Activated T-helper 1 cell treated with anti-CD3 and anti-CD28 coated beads, Interleukin-12 subunit alpha, Interleukin-12 subunit beta, Interleukin-2, Interleukin-4 antibody, amounts not matched to agents 30 ng/mL and 10 ng/mL and 1 ng/mL, durations not matched to agents 14 hours and 24 hours and 36 hours (primary cell): ENCODE measurements at regions of chr9 and their contacts with region 1.

Region 1: GRCh38 chr9:20622330-20623020 is at the start of gene MLLT3:
- DNase-seq: peak; percentile 97
- H3K4me3 Mint-ChIP-seq: peak within 1 kb of the TSS; percentile 88
- H3K27ac Mint-ChIP-seq: peak within 1 kb of the TSS; percentile 99
- H3K4me1 Mint-ChIP-seq: peaks cover 52% of the 10 kb centered on the region
- H3K27me3 Mint-ChIP-seq: no peaks in the 10 kb centered on the region
- total RNA-seq, gene MLLT3: 33.8 and 36.4 TPM in 2 replicates

Region 2: GRCh38 chr9:19184144-19184917 is 1438.1 kb before region 1 on chr9:
- intact Hi-C with region 1: loop called (anchors 5 kb)
- DNase-seq: peak; percentile 72
- H3K4me3 Mint-ChIP-seq: peak overlapping the region; percentile 67
- H3K27ac Mint-ChIP-seq: peak overlapping the region; percentile 89
- H3K4me1 Mint-ChIP-seq: peaks cover 18% of the 10 kb centered on the region
- H3K27me3 Mint-ChIP-seq: no peaks in the 10 kb centered on the region

Region 3: GRCh38 chr9:19934301-19934868 is 688.1 kb before region 1 on chr9:
- intact Hi-C with region 1: loop called (anchors 10 kb)
- DNase-seq: no peak
- H3K4me3 Mint-ChIP-seq: peak overlapping the region; percentile 62
- H3K27ac Mint-ChIP-seq: no peak overlapping the region
- H3K4me1 Mint-ChIP-seq: peaks cover 14% of the 10 kb centered on the region
- H3K27me3 Mint-ChIP-seq: peaks cover 4% of the 10 kb centered on the region

Region 4: DNA sequence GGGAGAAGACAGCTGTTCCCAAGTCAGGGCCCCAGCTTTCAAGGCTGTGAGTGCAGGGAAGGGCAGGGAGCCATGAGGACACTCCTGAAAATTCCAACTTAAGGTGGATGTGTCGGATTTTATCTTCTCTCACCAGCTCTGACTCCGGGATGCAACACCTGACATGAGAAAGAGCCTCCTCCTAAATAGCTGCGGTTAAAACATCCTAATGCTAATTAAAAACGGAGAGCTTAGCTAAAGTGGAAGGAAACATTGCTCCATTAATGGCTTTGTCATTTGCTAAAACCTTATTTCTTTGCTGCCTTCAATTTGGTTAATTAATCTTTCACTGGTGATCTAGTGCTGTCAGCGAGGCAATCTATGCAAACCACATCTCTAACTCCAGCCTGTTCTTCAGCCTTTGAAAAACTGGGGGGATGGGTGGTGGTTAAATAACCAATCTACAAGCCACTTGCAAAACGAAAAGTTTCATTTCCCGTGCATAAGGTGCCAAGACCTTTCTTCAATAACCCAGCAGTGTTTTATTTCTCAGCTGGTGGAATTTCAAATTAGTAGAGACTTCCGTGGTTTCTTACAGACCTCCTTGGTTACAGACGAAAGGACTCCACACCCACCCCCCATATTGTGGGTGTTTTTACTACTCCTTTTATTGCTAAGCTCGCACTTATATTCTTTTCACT is 379.8 kb before region 1 on chr9:
- intact Hi-C with region 1: loop called (anchors 1 kb)
- DNase-seq: peak; percentile 36
- H3K4me3 Mint-ChIP-seq: peak overlapping the region; percentile 36
- H3K27ac Mint-ChIP-seq: peak overlapping the region; percentile 27
- H3K4me1 Mint-ChIP-seq: peaks cover 65% of the 10 kb centered on the region
- H3K27me3 Mint-ChIP-seq: peaks cover 2% of the 10 kb centered on the region

Region 5: DNA sequence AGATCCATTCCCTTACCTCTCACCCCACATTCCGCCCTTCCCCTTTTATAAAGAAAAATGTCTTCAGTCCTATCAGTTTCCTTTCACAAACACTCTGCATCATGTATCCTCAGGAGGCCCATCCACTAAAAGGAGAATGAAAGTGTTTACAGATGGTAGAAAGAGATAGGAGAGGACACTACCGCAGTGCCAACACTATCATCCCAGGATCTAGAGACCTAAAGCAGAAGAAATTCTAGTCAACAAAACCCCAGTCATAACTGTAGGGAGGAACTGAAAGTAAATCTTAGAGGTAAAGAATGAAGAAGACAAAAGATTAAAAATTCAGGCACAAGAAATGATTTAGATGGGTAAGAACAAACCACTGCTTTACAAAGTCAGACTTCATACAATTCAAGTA is 114.2 kb before region 1 on chr9:
- intact Hi-C with region 1: loop called (anchors 1 kb)
- DNase-seq: peak; percentile 30
- H3K4me3 Mint-ChIP-seq: peak overlapping the region; percentile 13
- H3K27ac Mint-ChIP-seq: peak overlapping the region; percentile 5
- H3K4me1 Mint-ChIP-seq: peaks cover 77% of the 10 kb centered on the region
- H3K27me3 Mint-ChIP-seq: no peaks in the 10 kb centered on the region

Region 6: GRCh38 chr9:20684035-20684872 is 61.8 kb after region 1 on chr9 and contains the start of gene FOCAD:
- intact Hi-C with region 1: loop called (anchors 1 kb)
- DNase-seq: peak; percentile 96
- H3K4me3 Mint-ChIP-seq: peak within 1 kb of the TSS; percentile 89
- H3K27ac Mint-ChIP-seq: peak within 1 kb of the TSS; percentile 79
- H3K4me1 Mint-ChIP-seq: peaks cover 33% of the 10 kb centered on the region
- H3K27me3 Mint-ChIP-seq: no peaks in the 10 kb centered on the region
- total RNA-seq, gene FOCAD: 31.2 and 33.7 TPM in 2 replicates

Region 7: DNA sequence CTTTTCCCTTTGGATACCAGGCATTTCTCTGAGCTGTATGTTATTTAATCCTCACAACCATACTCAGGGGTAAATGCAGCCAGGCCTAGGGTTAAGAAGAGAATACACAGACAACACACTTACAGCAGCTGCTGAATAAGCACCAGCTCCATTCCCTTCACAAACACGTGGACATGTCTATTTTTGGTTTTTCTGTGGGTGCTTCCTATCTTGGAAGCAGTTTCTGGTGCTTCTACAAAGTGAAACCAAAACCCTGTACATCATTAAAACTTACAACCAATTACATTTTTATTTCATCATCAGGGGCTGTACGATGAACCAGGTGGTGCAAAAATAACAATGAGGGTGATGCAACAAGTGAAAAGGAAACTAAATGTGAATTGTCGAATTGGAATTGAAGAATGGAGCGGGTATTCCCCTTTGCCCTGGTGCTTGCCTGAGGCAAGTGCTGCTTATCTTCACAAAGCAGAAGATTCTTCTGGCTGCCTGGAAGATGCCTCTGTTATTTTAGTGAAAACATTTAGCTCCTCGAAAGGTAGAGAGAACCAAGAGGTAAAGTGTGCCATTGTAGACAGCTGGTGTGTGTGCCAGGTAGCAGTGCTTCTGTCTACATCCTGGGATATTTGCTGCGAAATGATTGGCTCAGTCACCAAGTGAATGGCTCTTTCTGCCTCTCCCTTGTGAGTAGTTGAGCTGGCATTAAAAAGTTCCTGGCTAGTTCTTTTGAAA is 473.9 kb after region 1 on chr9:
- intact Hi-C with region 1: loop called (anchors 5 kb)
- DNase-seq: peak; percentile 38
- H3K4me3 Mint-ChIP-seq: peak overlapping the region; percentile 54
- H3K27ac Mint-ChIP-seq: peak overlapping the region; percentile 56
- H3K4me1 Mint-ChIP-seq: peaks cover 35% of the 10 kb centered on the region
- H3K27me3 Mint-ChIP-seq: no peaks in the 10 kb centered on the region